Mammary epithelial cell (primary cell): ENCODE measurements at regions of chr16 and their contacts with region 1.

Region 1: GRCh38 chr16:56519459-56520250 is at the start of gene BBS2:
- DNase-seq: peak; percentile 89
- H3K4me3 ChIP-seq: peak within 1 kb of the TSS; percentile 92 to 97 (median 95)
- H3K27ac ChIP-seq: peak within 1 kb of the TSS; percentile 80
- H3K4me1 ChIP-seq: peaks cover 42% of the 10 kb centered on the region
- H3K27me3 ChIP-seq: no peaks in the 10 kb centered on the region
- CTCF ChIP-seq: peak in 1 of 2 donors; percentile 1
- total RNA-seq, gene BBS2: 46.5 to 60.0 TPM

Region 2: GRCh38 chr16:55585631-55586030 is 934.0 kb before region 1 on chr16:
- CTCF ChIA-PET with region 1: no interaction called
- dilution Hi-C with region 1: no loop called
- in situ Hi-C with region 1: no loop called
- intact Hi-C with region 1: loop called (anchors 5 kb)
- DNase-seq: no peak
- H3K4me3 ChIP-seq: no peak overlapping the region
- H3K27ac ChIP-seq: no peak overlapping the region
- H3K4me1 ChIP-seq: no peaks in the 10 kb centered on the region
- H3K27me3 ChIP-seq: no peaks in the 10 kb centered on the region
- CTCF ChIP-seq: no peak

Region 3: DNA sequence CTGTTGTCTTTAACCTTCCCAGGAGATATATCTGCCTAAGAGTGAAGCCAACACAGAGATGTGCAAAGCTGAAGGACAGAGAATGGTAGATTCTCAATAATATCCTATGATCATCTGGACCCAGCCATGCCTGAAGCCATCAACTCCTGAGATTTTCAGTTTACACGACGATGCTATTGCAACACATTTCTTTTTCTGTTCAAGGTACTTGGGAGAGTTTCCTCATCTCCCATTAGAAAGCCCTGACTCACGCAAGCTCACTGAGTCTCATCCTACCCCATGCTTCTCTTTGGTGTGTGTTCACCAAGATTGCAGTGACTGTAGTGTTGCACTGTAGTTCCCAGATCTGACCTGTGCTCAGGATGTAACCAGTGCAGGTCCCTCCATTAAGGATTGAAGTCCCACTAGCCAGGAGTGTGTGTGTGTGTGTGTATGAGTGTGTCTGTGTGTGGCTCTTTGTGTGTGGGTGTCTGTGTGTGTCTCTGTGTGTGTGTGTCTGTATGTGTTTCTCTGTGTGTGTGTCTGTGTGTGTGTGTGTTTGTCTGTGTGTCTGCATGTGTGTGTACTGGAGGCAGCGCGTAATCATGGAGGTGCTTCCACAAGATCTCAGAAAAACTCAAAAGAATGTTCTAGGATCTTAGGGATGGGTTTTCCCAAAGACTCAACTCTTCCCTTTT is 702.3 kb before region 1 on chr16:
- CTCF ChIA-PET with region 1: no interaction called
- dilution Hi-C with region 1: no loop called
- in situ Hi-C with region 1: no loop called
- intact Hi-C with region 1: no loop called
- DNase-seq: peak; percentile 35
- H3K4me3 ChIP-seq: no peak overlapping the region
- H3K27ac ChIP-seq: no peak overlapping the region
- H3K4me1 ChIP-seq: no peaks in the 10 kb centered on the region
- H3K27me3 ChIP-seq: no peaks in the 10 kb centered on the region
- CTCF ChIP-seq: no peak

Region 4: DNA sequence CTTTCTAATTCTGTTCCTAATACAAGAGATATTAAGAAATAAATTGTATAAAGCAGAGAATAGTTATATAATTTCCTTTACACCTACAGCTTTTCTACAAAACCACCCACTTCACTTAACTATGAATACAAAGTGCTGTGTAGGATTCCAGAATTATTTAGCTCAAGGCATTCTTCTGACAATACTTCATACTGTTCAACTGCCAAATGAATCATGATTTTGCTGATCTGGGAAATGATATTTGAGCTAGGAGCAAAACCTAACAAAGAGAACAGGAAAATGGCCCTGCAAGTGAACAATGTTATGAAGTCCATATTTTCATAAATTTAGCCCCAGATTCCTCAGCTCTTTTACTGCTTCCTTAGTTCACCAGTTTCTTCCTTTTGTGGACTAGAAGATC is 12.7 kb before region 1 on chr16:
- CTCF ChIA-PET with region 1: no interaction called
- dilution Hi-C with region 1: no loop called
- in situ Hi-C with region 1: no loop called
- intact Hi-C with region 1: no loop called
- DNase-seq: peak; percentile 70
- H3K4me3 ChIP-seq: no peak overlapping the region
- H3K27ac ChIP-seq: peak overlapping the region; percentile 5
- H3K4me1 ChIP-seq: peaks cover 10% of the 10 kb centered on the region
- H3K27me3 ChIP-seq: no peaks in the 10 kb centered on the region
- CTCF ChIP-seq: no peak

Region 5: DNA sequence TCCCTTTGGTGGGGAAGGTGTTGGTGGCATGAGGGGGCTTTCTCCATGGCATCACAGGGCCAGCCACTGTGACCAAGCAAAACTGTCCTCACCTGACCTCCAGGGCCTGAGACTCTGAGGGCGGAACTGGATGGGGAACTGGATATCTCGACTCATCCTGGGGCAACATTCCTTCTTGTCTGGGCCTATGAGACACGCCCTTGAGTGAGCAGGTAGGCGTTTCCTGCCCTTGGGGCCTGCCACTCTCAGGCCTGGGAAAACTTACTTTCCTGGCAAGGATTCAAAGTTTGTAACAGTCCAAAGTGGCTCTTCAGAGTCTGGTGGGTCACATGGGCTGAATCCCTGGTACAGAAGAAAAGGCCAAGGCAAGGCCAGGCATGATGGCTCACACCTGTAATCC is 172.2 kb after region 1 on chr16:
- CTCF ChIA-PET with region 1: no interaction called
- dilution Hi-C with region 1: no loop called
- in situ Hi-C with region 1: loop called in 1 of 2 experiments (anchors 10 kb)
- intact Hi-C with region 1: no loop called
- DNase-seq: peak; percentile 98
- H3K4me3 ChIP-seq: no peak overlapping the region
- H3K27ac ChIP-seq: peak overlapping the region; percentile 18
- H3K4me1 ChIP-seq: peaks cover 24% of the 10 kb centered on the region
- H3K27me3 ChIP-seq: no peaks in the 10 kb centered on the region
- CTCF ChIP-seq: no peak